Calu3 (cell line): ENCODE measurements at regions of chr1 and their contacts with region 1.

Region 1: DNA sequence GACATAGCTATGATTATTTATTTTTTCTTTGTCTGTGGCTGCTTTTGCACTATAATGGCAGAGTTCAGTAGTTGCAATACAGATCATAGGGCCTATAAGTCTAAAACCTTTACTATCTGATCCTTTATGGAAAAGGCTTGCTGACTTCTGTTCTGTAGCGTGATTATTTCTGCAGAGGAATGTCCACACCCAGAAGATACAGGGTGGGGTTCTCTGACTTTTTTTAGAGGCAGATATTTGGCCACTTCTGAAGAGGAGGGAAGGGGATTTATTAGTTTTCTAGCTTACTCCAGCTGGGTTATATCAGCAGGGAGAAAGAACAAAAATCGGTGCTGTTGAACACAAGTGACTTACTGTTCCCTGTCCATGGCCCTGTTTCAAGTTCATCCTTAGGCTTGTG is 97.6 kb downstream of the RPE65 start:
- DNase-seq: no peak
- H3K4me3 Mint-ChIP-seq: no peak overlapping the region
- H3K27ac Mint-ChIP-seq: no peak overlapping the region
- H3K4me1 Mint-ChIP-seq: no peaks in the 10 kb centered on the region
- H3K27me3 Mint-ChIP-seq: no peaks in the 10 kb centered on the region
- CTCF ChIP-seq: no peak

Region 2: GRCh38 chr1:67791686-67792475 is 560.3 kb before region 1 on chr1:
- CTCF ChIA-PET with region 1: no interaction called
- intact Hi-C with region 1: loop called (anchors 1 kb)
- DNase-seq: no peak
- H3K4me3 Mint-ChIP-seq: peak overlapping the region; percentile 6
- H3K27ac Mint-ChIP-seq: peak overlapping the region; percentile 19
- H3K4me1 Mint-ChIP-seq: peaks cover 43% of the 10 kb centered on the region
- H3K27me3 Mint-ChIP-seq: no peaks in the 10 kb centered on the region
- CTCF ChIP-seq: no peak

Region 3: GRCh38 chr1:68057564-68057963 is 294.6 kb before region 1 on chr1:
- CTCF ChIA-PET with region 1: no interaction called
- intact Hi-C with region 1: no loop called
- DNase-seq: no peak
- H3K4me3 Mint-ChIP-seq: no peak overlapping the region
- H3K27ac Mint-ChIP-seq: no peak overlapping the region
- H3K4me1 Mint-ChIP-seq: peaks cover 17% of the 10 kb centered on the region
- H3K27me3 Mint-ChIP-seq: no peaks in the 10 kb centered on the region
- CTCF ChIP-seq: no peak